ENCODE measurements at regions of chr1 and their contacts with region 1.

Region 1: DNA sequence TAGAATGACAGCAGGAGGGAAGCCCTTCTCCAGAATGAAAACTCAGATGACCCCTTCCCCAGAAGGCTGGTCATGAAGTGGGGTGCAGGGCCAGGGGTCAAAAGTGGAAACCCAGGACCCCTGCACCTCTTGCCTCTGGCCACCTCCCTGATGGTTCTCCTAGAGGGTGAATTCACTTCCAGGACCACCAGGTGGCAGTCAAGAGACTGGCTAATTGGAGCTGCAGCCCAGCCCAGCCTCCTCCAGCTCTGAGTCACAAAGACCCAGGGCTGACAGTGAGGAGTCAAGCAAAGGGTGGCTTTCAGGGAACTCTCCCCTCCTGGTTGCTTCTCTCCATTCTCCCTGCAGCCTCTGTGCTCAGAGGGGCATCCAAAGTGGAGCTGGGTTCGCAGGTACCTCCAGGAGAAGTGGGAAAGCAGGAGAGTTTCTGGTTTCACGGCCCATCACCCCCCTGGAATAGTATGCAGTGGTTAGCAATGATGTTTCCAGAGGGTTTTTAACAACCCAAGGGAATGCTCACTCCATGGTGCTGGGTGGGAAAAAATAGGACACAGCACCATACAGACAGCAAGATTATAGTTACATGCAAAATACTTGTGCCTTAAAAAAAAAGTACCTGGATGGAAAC is 6.1 kb upstream of the EPHB2 start:
- DNase-seq: peak; percentile 90
- H3K27ac ChIP-seq: no peak overlapping the region
- CTCF ChIP-seq: peak; percentile 91

Region 2: DNA sequence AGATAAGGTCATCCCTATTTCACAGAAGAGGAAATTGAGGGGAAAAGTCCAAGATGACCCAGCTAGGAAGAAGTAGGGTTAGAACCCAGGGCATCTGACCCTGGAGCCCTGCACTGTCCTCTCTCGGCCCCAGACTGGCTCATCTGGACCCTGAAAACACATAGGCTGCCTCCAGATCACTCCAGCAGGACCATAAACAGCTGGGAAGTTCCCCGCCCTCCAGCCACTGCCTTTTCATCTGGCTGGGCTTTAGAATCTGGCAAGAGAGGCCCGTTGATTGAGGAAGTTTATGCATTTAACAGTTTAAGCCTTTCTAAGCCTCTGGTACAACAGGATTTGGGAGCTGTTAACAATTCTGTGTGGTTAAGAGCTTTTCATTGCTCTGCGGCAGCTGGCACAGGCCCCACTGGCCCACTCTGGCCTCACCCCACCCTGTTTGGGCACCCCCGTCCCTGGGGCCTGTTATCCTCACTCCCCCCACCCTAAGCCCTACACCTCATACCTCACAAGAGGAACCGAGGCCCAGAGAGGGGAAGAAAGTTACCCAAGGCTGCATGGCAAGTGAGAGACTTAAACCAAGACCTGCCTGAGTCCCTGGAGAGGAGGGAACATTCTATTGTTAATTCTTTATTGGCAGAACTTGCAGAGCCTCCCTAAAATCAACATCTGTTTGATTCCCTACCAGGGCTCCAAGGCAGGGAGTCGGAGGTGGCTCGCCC is 90.3 kb after region 1 on chr1:
- CTCF ChIA-PET with region 1: no interaction called
- POLR2A ChIA-PET with region 1: no interaction called
- DNase-seq: no peak
- H3K27ac ChIP-seq: peak overlapping the region; percentile 23; the same call in 1 of the 2 replicates
- CTCF ChIP-seq: no peak

Region 3: DNA sequence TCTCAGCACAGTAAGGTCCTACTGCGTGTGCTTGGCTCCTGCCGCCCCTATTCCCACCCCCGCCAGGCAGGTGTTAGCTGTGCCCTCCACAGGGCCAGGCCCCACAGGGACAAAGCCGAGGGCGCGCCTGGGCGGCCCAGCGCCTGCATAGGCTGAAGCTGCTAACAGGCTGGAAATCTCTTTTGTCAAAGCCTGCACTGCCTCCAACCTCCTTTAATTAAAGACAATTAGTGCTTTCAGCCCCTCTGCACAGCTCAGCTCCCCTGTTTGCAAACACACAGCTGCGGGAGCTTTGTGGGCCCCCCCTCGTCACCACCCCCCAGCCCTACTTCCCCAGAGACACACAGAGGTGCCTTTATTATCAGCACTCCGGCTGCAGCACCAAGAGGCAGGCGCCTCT is 102.0 kb after region 1 on chr1:
- CTCF ChIA-PET with region 1: no interaction called
- POLR2A ChIA-PET with region 1: no interaction called
- DNase-seq: no peak
- H3K27ac ChIP-seq: 0 out of 2 replicates have a peak overlapping the region, but pooled peaks have one; percentile 11
- CTCF ChIP-seq: no peak

Region 4: DNA sequence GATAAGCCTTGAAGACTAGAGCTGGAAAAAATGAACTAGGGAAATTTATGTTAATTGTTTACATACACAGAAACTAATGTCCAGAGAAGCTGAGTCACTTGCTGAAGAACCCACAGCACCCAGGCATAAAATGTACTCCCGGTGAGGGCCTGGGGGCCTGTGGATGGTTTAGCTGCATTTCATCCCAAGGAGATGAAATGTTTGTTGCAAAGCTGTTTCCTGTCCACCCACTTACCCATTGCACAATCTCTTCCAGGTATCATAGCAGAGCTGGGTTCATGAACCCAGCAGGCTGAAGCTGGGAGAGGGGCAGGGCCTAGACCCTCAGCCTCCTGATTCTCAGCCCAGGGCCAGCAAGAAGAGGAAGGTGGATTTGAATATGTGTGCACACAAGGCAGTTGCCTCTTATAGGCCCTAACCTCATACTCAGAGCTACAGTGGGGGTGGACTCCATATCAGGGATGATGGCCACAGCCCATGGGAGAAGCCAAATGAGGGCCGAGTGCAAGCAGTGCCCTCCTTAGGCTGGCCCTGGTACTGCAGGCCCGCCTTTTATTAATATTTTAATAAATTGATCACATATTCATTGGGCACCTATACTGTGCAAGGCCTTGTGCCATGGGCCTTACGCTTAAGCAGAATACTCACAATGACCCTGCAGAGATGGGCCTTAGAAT is 157.3 kb after region 1 on chr1:
- CTCF ChIA-PET with region 1: interaction called, 18 read pairs
- POLR2A ChIA-PET with region 1: no interaction called
- DNase-seq: peak; percentile 71
- H3K27ac ChIP-seq: peak overlapping the region; percentile 37
- CTCF ChIP-seq: peak; percentile 64

Region 5: GRCh38 chr1:22889213-22889827 is 184.8 kb after region 1 on chr1:
- CTCF ChIA-PET with region 1: interaction called, 22 read pairs
- POLR2A ChIA-PET with region 1: no interaction called
- DNase-seq: peak; percentile 69
- H3K27ac ChIP-seq: peak overlapping the region; percentile 72
- CTCF ChIP-seq: peak; percentile 89

Region 6: GRCh38 chr1:22930235-22930912 is 225.8 kb after region 1 on chr1:
- CTCF ChIA-PET with region 1: interaction called, 10 read pairs
- POLR2A ChIA-PET with region 1: no interaction called
- DNase-seq: peak; percentile 86
- H3K27ac ChIP-seq: no peak overlapping the region
- CTCF ChIP-seq: peak; percentile 65

Measured in RWPE1 (cell line).